Esophagus squamous epithelium (tissue), 5 donors: ENCODE measurements at regions of chr13 and their contacts with region 1.

Region 1: GRCh38 chr13:26698392-26699196 is 62.0 kb downstream of the GPR12 start:
- DNase-seq: peak; percentile 15
- H3K4me3 ChIP-seq: peak overlapping the region in 3 of 4 donors; percentile 1 to 25 (median 25)
- H3K27ac ChIP-seq: no peak overlapping the region
- H3K4me1 ChIP-seq: peaks cover 0 to 9% (median 3%) of the 10 kb centered on the region in 3 donors
- H3K27me3 ChIP-seq: peaks cover 0 to 9% (median 0%) of the 10 kb centered on the region in 4 donors
- CTCF ChIP-seq: peak; percentile 90 to 99 (median 95)
- POLR2A ChIP-seq: no peak

Region 2: GRCh38 chr13:26485786-26486185 is 212.8 kb before region 1 on chr13:
- intact Hi-C with region 1: loop called (anchors 5 kb)
- DNase-seq: no peak
- H3K4me3 ChIP-seq: no peak overlapping the region
- H3K27ac ChIP-seq: peak overlapping the region in 3 of 4 donors; percentile 14 to 65 (median 55)
- H3K4me1 ChIP-seq: peaks cover 0 to 17% (median 0%) of the 10 kb centered on the region in 3 donors
- H3K27me3 ChIP-seq: no peaks in the 10 kb centered on the region
- CTCF ChIP-seq: no peak
- POLR2A ChIP-seq: no peak